A673 (cell line): ENCODE measurements at regions of chr17 and their contacts with region 1.

Region 1: DNA sequence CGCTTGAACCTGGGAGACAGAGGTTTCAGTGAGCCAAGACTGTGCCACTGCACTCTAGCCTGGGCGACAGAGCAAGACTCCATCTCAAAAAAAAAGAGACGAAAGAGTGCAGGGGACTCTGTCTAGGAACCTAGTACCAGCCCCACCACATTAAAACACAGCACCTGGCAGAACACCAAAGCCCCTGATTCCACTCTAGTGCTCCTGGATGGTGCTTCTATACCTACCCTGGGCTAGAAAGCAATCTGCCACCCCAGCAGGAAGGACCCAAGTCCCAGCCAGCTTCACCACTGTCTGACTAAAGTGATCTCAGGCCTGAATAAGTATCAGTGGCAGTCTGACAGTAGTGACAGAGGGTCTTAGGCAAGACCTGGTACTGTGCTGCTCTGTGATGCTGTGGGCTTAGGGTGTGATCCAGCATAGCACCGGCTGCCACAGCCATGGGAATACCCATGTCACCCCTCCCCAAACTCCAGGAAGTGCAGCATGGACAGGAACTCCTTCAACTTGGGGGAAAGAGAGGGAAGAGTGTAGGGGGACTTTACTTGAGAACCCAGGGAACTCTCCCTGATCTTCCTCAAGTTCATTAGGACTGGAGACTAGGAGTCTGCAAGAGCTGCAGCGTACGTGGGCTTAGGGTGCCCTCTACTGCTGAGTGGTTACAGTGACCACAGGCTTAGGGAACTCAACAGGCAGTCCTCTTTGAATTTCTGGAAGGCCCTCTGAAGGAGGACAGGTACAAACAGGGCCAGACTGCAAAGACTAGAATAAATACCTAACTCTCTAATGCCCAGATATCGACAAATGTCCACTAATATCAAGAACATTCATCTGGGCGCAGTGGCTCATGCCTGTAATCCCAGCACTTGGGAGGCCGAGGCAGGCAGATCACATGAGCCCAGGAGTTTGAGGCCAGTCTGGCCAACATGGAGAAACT is 30.0 kb upstream of the RNF43 start:
- DNase-seq: peak; percentile 82
- H3K4me3 ChIP-seq: no peak overlapping the region
- H3K27ac ChIP-seq: no peak overlapping the region
- H3K4me1 ChIP-seq: no peaks in the 10 kb centered on the region
- H3K27me3 ChIP-seq: peaks cover 13% of the 10 kb centered on the region
- CTCF ChIP-seq: peak; percentile 76

Region 2: DNA sequence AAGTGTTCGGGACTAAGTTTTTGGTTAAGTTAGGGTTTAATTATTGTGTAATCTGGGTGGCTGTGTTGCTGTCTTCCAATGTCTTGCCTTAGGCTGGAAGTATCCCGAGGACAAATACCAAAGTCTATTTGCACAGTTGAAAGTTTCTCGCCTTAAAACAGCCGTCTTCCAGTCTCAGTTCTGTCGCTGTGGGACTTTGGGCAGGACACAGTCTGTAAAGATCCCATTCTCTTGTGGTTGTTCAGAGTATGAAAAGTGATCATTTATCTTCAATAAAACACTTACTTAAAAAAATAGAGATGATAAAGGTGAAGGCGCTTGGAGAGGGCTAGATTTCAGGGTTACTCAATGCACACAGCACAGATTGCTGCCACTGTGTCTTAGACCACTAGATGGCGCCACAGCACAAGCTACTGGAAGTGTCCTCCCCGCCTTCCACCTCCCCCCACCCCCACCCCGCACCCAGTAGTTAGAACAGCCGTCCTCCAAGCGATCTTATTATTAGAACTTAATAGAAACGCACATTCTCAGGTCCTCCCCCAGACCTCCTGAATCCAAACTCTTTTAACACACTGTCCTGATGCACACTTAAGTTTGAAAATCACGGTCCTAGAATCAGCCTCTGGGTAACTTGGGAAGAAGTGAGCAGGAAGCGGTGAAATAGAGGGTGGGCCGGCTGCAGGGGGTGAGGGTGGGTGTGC is 1316.4 kb before region 1 on chr17:
- CTCF ChIA-PET with region 1: no interaction called
- POLR2A ChIA-PET with region 1: no interaction called
- intact Hi-C with region 1: loop called (anchors 5 kb)
- DNase-seq: peak; percentile 87
- H3K4me3 ChIP-seq: peak overlapping the region; percentile 28
- H3K27ac ChIP-seq: no peak overlapping the region
- H3K4me1 ChIP-seq: peaks cover 4% of the 10 kb centered on the region
- H3K27me3 ChIP-seq: no peaks in the 10 kb centered on the region
- CTCF ChIP-seq: peak; percentile 75

Region 3: DNA sequence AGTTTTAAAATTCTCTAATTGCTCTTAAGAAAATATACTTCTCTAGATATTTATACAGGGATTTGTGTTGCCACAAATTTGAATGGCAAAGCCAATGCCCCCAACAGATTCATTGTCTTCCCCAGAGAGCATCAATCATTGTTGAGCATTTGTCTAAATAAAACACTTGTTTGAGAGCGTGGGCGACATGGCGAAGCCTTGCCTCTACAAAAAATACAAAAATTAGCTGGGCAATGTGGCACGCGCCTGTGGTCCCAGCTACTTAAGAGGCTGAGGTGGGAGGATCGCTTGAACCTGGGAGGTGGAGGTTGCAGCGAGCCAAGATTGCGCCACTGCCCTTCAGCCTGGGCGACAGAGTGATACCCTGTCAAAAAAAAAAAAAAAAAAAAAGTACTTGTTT is 426.9 kb before region 1 on chr17:
- CTCF ChIA-PET with region 1: no interaction called
- POLR2A ChIA-PET with region 1: no interaction called
- intact Hi-C with region 1: no loop called
- DNase-seq: no peak
- H3K4me3 ChIP-seq: no peak overlapping the region
- H3K27ac ChIP-seq: no peak overlapping the region
- H3K4me1 ChIP-seq: peaks cover 3% of the 10 kb centered on the region
- H3K27me3 ChIP-seq: peaks cover 2% of the 10 kb centered on the region
- CTCF ChIP-seq: no peak

Region 4: DNA sequence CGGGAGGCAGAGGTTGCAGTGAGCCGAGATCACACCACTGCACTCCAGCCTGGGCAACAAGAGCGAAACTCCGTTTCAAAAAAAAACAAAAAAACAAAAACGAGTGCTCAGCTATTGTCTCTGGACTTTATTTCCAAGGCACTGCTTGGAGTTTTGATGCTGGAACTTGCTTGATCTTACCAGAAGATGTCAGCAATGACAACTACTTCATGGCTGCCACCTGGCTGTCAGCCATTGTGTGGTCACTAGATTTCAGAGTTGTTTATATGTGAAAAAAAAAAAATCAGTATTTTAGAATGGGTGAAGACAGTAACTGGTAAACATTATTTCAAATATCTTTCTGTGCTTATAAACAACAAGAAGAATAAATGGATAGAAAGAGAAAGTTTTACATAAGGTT is 325.4 kb before region 1 on chr17:
- CTCF ChIA-PET with region 1: no interaction called
- POLR2A ChIA-PET with region 1: no interaction called
- intact Hi-C with region 1: loop called (anchors 5 kb)
- DNase-seq: peak; percentile 45
- H3K4me3 ChIP-seq: no peak overlapping the region
- H3K27ac ChIP-seq: no peak overlapping the region
- H3K4me1 ChIP-seq: no peaks in the 10 kb centered on the region
- H3K27me3 ChIP-seq: peaks cover 48% of the 10 kb centered on the region
- CTCF ChIP-seq: peak; percentile 42

Region 5: DNA sequence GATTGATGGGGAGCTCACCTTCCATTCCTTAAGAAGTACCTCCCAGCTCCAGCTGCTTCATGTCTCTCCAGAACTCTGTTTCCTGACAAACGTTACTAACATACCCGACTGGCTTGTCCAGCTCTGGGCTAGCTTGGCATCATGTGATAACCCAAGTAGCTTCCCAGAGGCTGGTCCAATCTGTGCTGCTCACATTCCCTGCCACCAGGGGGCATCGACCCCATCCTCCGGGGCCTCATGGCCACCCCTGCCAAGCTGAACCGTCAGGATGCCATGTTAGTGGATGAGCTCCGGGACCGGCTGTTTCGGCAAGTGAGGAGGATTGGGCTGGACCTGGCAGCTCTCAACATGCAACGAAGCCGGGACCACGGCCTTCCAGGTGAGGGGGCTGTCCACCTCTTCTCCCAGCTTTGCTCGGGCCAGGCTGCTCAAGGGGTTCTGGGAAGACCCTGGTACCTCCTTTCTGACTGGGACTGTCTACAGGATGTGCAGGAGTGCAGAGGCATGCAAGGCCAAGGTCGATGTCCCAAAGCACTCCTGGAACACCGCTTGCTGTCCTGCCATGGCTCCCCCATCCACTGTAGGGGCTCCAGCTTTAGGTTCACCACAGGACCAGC is 247.2 kb before region 1 on chr17:
- CTCF ChIA-PET with region 1: no interaction called
- POLR2A ChIA-PET with region 1: no interaction called
- intact Hi-C with region 1: loop called (anchors 1 kb)
- DNase-seq: peak; percentile 78
- H3K4me3 ChIP-seq: no peak overlapping the region
- H3K27ac ChIP-seq: no peak overlapping the region
- H3K4me1 ChIP-seq: no peaks in the 10 kb centered on the region
- H3K27me3 ChIP-seq: peaks cover 10% of the 10 kb centered on the region
- CTCF ChIP-seq: peak; percentile 78

Region 6: GRCh38 chr17:58303971-58304725 is 143.2 kb before region 1 on chr17:
- CTCF ChIA-PET with region 1: no interaction called
- POLR2A ChIA-PET with region 1: no interaction called
- intact Hi-C with region 1: loop called (anchors 5 kb)
- DNase-seq: peak; percentile 75
- H3K4me3 ChIP-seq: no peak overlapping the region
- H3K27ac ChIP-seq: no peak overlapping the region
- H3K4me1 ChIP-seq: no peaks in the 10 kb centered on the region
- H3K27me3 ChIP-seq: peaks cover 5% of the 10 kb centered on the region
- CTCF ChIP-seq: peak; percentile 91

Region 7: DNA sequence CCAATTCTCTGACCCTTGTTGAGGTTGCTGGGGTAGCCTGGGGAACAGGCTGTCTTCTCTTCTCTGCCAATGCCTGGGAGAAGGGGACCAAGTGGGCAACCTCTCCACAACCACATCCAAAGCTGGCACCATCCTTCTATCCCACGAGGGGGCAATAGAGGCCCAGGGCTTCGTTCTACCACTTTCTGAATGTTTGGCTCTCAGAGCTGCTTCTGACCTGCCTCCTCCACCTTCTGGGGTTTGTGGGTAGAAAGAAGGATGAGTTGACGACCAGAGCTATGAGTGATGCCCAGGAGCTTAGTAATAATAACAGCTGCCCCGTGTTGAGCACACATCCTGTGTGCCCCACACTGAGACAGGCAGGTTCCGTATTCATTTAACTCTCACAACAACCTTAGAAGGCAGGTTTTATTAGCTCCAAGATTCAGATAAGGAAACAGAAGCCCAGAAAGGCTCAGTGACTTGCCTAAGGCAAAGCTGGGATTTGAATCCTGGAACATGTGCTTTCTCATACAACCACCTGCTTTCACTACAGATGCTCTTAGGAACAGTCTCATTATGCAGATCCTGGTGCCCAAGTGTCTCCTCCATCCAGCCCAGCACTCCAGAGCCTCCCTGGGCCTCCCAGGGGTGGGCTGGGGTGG is 129.8 kb before region 1 on chr17:
- CTCF ChIA-PET with region 1: interaction called, 5 read pairs
- POLR2A ChIA-PET with region 1: no interaction called
- intact Hi-C with region 1: loop called (anchors 5 kb)
- DNase-seq: peak; percentile 58
- H3K4me3 ChIP-seq: no peak overlapping the region
- H3K27ac ChIP-seq: no peak overlapping the region
- H3K4me1 ChIP-seq: peaks cover 15% of the 10 kb centered on the region
- H3K27me3 ChIP-seq: no peaks in the 10 kb centered on the region
- CTCF ChIP-seq: peak; percentile 71